Activated naive CD8-positive, alpha-beta T cell treated with anti-CD3 and anti-CD28 coated beads, Interleukin-2, amount 10 ng/mL, durations not matched to agents 7 days and 5 days (primary cell): ENCODE measurements at regions of chr20 and their contacts with region 1.

Region 1: DNA sequence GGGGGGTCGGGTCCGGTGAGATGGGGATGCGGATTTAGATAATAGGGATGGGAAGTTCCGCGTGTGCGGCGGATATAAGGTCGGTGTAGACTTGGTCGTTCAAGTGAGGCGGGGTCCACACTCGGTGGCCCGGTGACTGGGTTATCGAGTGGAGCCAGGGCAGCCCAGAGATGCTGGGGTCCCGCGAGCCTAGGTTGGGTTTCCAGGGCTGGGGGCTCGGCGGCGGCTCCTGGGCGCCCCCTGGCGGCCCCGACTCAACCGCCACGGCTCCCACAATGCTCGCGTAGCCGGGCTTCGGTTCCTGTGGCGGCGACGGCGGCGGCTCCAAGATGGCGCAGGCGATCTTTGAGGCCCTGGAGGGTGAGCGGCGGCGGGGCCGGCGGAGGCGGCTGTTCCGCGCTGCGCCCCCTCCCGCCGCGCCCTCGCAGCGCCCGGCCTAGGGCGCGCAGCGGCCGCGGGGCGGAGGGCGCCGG is at the start of gene ZNF341:
- DNase-seq: no peak
- ATAC-seq: peak; percentile 86
- H3K4me3 Mint-ChIP-seq: peak within 1 kb of the TSS; percentile 87
- H3K27ac Mint-ChIP-seq: peak within 1 kb of the TSS; percentile 90
- H3K4me1 Mint-ChIP-seq: peaks cover 18% of the 10 kb centered on the region
- H3K27me3 Mint-ChIP-seq: no peaks in the 10 kb centered on the region
- total RNA-seq, gene ZNF341: 5.1 to 5.7 TPM

Region 2: GRCh38 chr20:33686100-33686983 is 45.4 kb before region 1 on chr20 and contains the start of gene E2F1:
- POLR2A ChIA-PET with region 1: interaction called, 23 read pairs
- DNase-seq: peak; percentile 99
- ATAC-seq: peak; percentile 85
- H3K4me3 Mint-ChIP-seq: peak within 1 kb of the TSS; percentile 93
- H3K27ac Mint-ChIP-seq: peak within 1 kb of the TSS; percentile 90
- H3K4me1 Mint-ChIP-seq: peaks cover 70% of the 10 kb centered on the region
- H3K27me3 Mint-ChIP-seq: no peaks in the 10 kb centered on the region
- total RNA-seq, gene E2F1: 62.5 to 68.4 TPM